Heart left ventricle (tissue), 16 donors: ENCODE measurements at regions of chr9 and their contacts with region 1.

Region 1: GRCh38 chr9:19969721-19970120 is 180.9 kb upstream of the SLC24A2 start:
- DNase-seq: no peak
- ATAC-seq: no peak
- H3K4me3 ChIP-seq: no peak overlapping the region
- H3K27ac ChIP-seq: no peak overlapping the region
- H3K4me1 ChIP-seq: no peaks in the 10 kb centered on the region
- H3K27me3 ChIP-seq: no peaks in the 10 kb centered on the region
- CTCF ChIP-seq: no peak
- POLR2A ChIP-seq: no peak

Region 2: GRCh38 chr9:19809401-19810269 is 160.1 kb before region 1 on chr9:
- intact Hi-C with region 1: no loop called
- DNase-seq: no peak
- ATAC-seq: no peak
- H3K4me3 ChIP-seq: no peak overlapping the region
- H3K27ac ChIP-seq: no peak overlapping the region
- H3K4me1 ChIP-seq: no peaks in the 10 kb centered on the region
- H3K27me3 ChIP-seq: no peaks in the 10 kb centered on the region
- CTCF ChIP-seq: no peak
- POLR2A ChIP-seq: no peak

Region 3: GRCh38 chr9:19895006-19895405 is 74.7 kb before region 1 on chr9:
- intact Hi-C with region 1: no loop called
- DNase-seq: no peak
- ATAC-seq: no peak
- H3K4me3 ChIP-seq: no peak overlapping the region
- H3K27ac ChIP-seq: no peak overlapping the region
- H3K4me1 ChIP-seq: no peaks in the 10 kb centered on the region
- H3K27me3 ChIP-seq: no peaks in the 10 kb centered on the region
- CTCF ChIP-seq: no peak
- POLR2A ChIP-seq: no peak

Region 4: DNA sequence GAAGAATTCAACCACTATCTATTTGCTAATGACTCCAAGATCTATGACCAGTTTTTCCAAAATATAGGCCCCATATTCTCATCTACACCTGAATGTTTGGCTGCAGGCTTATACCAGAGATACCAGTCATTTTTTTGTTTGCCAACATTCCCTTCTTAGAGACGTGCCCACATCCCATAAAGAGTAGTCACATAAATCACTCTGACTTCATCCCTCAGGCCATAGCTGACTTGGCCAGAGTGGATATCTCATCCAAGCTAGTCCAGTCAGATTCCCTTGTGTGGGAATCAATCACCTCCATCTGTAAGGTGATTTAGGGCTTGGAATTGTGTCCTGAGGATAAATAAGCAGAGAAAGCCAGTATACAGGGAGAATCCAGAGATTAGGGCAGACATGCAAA is 56.6 kb before region 1 on chr9:
- intact Hi-C with region 1: no loop called
- DNase-seq: no peak
- ATAC-seq: no peak
- H3K4me3 ChIP-seq: no peak overlapping the region
- H3K27ac ChIP-seq: no peak overlapping the region
- H3K4me1 ChIP-seq: no peaks in the 10 kb centered on the region
- H3K27me3 ChIP-seq: peaks cover 0 to 3% (median 0%) of the 10 kb centered on the region in 9 donors
- CTCF ChIP-seq: no peak
- POLR2A ChIP-seq: no peak

Region 5: GRCh38 chr9:20012232-20012631 is 42.5 kb after region 1 on chr9:
- intact Hi-C with region 1: loop called in 1 of 10 experiments (anchors 2 kb)
- DNase-seq: no peak
- ATAC-seq: no peak
- H3K4me3 ChIP-seq: no peak overlapping the region
- H3K27ac ChIP-seq: no peak overlapping the region
- H3K4me1 ChIP-seq: peaks cover 0 to 9% (median 0%) of the 10 kb centered on the region in 12 donors
- H3K27me3 ChIP-seq: no peaks in the 10 kb centered on the region
- CTCF ChIP-seq: no peak
- POLR2A ChIP-seq: no peak

Region 6: DNA sequence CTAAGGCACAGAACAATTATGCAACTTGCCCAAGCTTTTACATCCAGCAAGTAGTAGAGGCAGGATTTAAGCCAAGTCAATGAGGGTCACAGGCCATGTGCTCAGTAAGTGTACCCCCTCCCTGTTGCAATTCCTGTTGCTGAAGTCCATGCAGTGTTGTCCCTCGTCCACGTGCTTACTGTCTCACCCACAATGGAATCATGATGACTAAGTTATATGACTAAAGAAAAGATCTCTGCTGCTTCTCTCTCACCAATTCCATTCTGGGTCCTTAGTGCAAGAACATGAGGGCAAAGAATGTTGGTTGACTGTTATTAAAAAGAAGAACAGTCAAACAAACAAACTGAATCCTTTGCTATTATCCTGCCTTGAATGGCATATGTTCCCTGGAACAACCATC is 52.7 kb after region 1 on chr9:
- intact Hi-C with region 1: loop called in 1 of 10 experiments (anchors 5 kb)
- DNase-seq: no peak
- ATAC-seq: no peak
- H3K4me3 ChIP-seq: no peak overlapping the region
- H3K27ac ChIP-seq: no peak overlapping the region
- H3K4me1 ChIP-seq: peaks cover 0 to 1% (median 0%) of the 10 kb centered on the region in 12 donors
- H3K27me3 ChIP-seq: no peaks in the 10 kb centered on the region
- CTCF ChIP-seq: no peak
- POLR2A ChIP-seq: no peak